Posterior cingulate gyrus (tissue), 11 donors: ENCODE measurements at regions of chr16 and their contacts with region 1.

Region 1: GRCh38 chr16:30368122-30368791 is 2.0 kb downstream of the TBC1D10B start:
- DNase-seq: peak in 1 of 10 donors; percentile 19

Region 2: DNA sequence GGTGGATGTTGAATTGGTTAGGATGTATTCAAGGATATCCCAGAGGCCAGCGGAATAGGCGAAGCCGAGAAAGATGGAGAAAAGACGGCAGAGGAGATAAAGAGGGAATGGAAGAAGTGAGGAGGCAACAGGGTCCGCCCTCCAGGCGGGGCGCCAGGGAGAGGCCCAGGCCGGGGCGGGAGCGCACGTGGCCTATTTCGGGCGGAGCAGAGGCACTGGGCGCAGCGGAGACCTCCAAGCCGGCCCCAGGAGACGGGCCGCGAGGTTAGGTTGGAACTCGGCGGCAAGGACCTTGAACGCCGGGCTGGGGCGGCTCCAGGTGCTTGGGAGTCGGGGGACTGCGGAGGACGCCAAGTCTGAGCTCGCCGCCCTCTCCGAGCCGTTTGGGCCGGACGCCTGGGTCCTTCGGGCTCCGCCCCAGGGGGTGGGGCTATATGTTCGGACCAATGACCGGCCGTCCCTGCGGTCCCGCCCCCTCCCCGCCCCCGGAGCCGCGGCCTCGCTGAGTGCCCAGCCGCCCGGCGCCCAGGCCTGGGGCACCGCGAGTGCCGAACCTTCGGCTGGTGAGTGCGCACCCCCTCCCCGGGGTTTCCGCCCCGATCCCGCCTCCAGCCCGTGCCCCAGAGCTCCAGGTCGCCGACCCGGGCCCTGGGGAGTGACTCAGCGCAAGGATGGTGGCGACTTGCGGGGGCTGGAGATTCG is 39.0 kb after region 1 on chr16 and contains the start of gene ZNF771:
- intact Hi-C with region 1: loop called (anchors 5 kb)
- DNase-seq: peak; percentile 89 to 99 (median 94)

Region 3: DNA sequence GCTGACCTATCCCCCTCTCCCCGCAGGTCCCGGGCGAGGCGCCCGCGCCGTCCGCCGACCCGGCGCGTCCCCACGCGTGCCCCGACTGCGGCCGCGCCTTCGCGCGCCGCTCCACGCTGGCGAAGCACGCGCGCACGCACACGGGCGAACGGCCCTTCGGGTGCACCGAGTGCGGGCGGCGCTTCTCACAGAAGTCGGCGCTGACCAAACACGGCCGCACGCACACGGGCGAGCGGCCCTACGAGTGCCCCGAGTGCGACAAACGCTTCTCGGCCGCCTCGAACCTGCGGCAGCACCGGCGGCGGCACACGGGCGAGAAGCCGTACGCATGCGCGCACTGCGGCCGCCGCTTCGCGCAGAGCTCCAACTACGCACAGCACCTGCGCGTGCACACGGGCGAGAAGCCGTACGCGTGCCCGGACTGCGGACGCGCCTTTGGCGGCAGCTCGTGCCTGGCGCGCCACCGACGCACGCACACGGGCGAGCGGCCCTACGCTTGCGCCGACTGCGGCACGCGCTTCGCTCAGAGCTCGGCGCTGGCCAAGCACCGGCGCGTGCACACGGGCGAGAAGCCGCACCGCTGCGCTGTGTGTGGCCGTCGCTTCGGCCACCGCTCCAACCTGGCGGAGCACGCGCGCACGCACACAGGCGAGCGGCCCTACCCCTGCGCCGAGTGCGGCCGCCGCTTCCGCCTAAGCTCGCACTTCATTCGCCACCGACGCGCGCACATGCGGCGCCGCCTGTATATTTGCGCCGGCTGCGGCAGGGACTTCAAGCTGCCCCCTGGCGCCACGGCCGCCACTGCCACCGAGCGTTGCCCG is 49.5 kb after region 1 on chr16:
- intact Hi-C with region 1: no loop called
- DNase-seq: peak; percentile 60 to 97 (median 73)

Region 4: DNA sequence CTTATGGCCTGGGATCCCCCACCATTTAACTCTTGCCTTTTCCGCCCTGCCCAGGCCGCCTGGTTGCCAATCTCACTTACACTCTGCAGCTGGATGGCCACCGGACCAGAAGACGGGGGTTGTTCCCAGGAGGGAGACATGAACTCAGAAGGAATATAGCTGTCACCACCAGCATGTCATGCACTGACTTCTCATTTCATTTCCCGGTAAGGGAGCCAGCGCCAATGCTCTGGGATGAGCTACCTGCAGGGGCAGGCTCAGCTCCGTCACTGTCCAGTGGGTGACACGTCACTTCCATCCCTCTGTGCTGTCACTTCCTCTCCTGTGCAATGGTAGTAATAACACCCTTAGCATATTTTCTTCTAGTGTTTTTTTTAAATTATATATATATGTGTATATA is 131.0 kb after region 1 on chr16:
- intact Hi-C with region 1: no loop called
- DNase-seq: no peak